IMR-90 (cell line): ENCODE measurements at regions of chr4 and their contacts with region 1.

Region 1: DNA sequence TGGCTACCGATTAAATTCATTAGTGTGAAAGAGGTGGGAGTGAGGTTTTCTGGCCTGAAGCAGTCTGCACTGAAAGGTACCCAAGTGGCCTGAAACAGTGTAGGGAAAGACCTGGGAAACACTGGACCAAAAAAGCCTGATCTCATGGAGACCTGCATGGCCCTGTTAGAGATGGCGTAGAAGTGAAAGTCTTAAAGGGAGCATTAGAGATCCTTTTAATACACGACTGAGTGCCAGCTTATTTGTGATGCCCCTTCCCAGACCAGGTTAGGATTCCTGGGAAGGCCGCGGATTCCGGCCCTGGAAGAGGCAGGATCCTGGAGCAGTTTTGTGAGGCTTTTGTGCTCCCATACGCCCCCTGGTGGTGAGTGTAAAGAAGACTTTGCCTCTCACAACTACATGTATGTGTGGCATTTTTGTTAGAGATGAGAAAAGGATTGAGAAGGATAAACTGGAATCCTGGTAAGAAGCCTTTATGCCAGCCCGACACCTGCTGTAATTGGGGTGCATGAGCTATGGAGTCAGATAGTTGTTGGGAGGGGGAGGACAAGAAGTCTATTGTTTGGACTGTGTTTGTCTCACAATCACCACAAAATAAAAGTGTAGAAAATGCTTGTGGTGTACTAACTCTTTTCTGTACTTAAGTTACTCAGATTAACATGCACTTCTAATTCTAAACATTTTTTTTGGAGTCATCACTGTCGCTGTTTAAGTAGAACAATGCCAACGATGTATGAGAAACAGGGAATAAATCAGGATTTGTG is 54.0 kb downstream of the JADE1 start:
- DNase-seq: peak; percentile 80
- ATAC-seq: peak; percentile 65; the same call in 1 of the 2 replicates
- H3K4me3 ChIP-seq: no peak overlapping the region
- H3K27ac ChIP-seq: 0 out of 2 replicates have a peak overlapping the region, but pooled peaks have one; percentile 0
- H3K4me1 ChIP-seq: peaks cover 24% of the 10 kb centered on the region
- H3K27me3 ChIP-seq: no peaks in the 10 kb centered on the region
- CTCF ChIP-seq: peak; percentile 79
- POLR2A ChIP-seq: no peak
- RAD21 ChIP-seq: peak; percentile 78

Region 2: GRCh38 chr4:128553686-128554515 is 309.6 kb before region 1 on chr4:
- CTCF ChIA-PET with region 1: no interaction called
- POLR2A ChIA-PET with region 1: no interaction called
- dilution Hi-C with region 1: no loop called
- in situ Hi-C with region 1: no loop called
- intact Hi-C with region 1: loop called (anchors 5 kb)
- DNase-seq: no peak
- ATAC-seq: no peak; the same call in 1 of the 2 replicates
- H3K4me3 ChIP-seq: peak overlapping the region; percentile 53; the same call in 1 of the 2 replicates
- H3K27ac ChIP-seq: peak overlapping the region; percentile 88; the same call in 1 of the 2 replicates
- H3K4me1 ChIP-seq: peaks cover 14% of the 10 kb centered on the region
- H3K27me3 ChIP-seq: no peaks in the 10 kb centered on the region
- CTCF ChIP-seq: no peak
- POLR2A ChIP-seq: no peak
- RAD21 ChIP-seq: no peak

Region 3: DNA sequence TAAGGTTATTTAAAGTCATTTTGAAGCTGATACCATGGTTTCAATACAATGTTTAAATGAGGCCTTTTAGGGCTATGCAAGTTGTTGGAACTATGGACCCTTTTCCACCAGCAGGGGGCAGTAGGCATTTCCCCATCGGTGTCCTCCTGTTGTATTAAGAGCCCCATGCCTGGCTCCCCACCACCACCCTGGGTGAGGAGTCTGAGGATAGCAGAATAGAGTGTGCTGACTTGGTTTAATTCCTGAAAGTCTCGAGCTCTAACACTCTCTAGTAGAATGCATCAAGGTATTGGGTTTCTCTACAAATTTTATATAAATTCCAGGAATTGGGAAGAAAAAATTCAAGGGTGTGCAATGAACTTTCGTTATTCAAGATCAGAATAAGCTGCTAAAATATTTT is 288.8 kb before region 1 on chr4:
- CTCF ChIA-PET with region 1: no interaction called
- POLR2A ChIA-PET with region 1: no interaction called
- dilution Hi-C with region 1: no loop called
- in situ Hi-C with region 1: loop called (anchors 10 kb)
- intact Hi-C with region 1: loop called (anchors 5 kb)
- DNase-seq: peak; percentile 68
- ATAC-seq: peak; percentile 25
- H3K4me3 ChIP-seq: no peak overlapping the region
- H3K27ac ChIP-seq: no peak overlapping the region
- H3K4me1 ChIP-seq: peaks cover 22% of the 10 kb centered on the region
- H3K27me3 ChIP-seq: no peaks in the 10 kb centered on the region
- CTCF ChIP-seq: peak; percentile 58
- POLR2A ChIP-seq: no peak
- RAD21 ChIP-seq: peak; percentile 55

Region 4: DNA sequence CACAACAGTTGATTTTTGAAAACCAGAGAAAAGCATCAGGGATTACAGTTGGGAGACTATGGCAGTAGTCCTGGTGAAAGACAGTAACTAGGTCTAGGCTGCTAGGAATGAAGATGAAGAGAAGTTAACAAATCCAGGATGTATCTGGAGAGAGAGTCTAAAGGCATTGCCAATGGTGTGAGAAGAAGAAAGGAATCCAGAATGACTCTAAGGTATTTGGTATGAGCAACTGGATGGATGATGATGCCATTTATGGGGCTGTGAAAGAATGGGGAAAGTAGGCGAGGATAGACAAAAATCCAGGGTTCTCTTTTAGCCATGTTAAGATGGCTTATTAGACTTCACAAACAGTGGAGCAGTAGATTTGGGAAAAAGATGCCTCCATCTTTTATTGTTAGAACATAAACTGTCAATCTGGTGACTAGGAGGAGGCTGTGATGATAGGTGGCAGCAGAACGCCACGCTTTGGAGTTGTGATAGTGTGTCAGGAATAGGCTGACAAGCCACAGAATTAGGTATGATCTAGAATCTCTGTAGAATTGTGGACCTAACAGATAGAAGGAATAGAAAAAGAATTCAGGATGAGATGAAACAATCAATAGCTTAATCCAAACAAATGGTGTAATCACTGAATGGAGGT is 81.3 kb before region 1 on chr4:
- CTCF ChIA-PET with region 1: no interaction called
- POLR2A ChIA-PET with region 1: no interaction called
- dilution Hi-C with region 1: no loop called
- in situ Hi-C with region 1: no loop called
- intact Hi-C with region 1: no loop called
- DNase-seq: peak; percentile 37
- ATAC-seq: peak; percentile 67
- H3K4me3 ChIP-seq: no peak overlapping the region
- H3K27ac ChIP-seq: no peak overlapping the region
- H3K4me1 ChIP-seq: peaks cover 3% of the 10 kb centered on the region; the same call in 1 of the 2 replicates
- H3K27me3 ChIP-seq: no peaks in the 10 kb centered on the region
- CTCF ChIP-seq: no peak
- POLR2A ChIP-seq: no peak
- RAD21 ChIP-seq: no peak